ENCODE measurements at regions of chr2 and their contacts with region 1.

Region 1: DNA sequence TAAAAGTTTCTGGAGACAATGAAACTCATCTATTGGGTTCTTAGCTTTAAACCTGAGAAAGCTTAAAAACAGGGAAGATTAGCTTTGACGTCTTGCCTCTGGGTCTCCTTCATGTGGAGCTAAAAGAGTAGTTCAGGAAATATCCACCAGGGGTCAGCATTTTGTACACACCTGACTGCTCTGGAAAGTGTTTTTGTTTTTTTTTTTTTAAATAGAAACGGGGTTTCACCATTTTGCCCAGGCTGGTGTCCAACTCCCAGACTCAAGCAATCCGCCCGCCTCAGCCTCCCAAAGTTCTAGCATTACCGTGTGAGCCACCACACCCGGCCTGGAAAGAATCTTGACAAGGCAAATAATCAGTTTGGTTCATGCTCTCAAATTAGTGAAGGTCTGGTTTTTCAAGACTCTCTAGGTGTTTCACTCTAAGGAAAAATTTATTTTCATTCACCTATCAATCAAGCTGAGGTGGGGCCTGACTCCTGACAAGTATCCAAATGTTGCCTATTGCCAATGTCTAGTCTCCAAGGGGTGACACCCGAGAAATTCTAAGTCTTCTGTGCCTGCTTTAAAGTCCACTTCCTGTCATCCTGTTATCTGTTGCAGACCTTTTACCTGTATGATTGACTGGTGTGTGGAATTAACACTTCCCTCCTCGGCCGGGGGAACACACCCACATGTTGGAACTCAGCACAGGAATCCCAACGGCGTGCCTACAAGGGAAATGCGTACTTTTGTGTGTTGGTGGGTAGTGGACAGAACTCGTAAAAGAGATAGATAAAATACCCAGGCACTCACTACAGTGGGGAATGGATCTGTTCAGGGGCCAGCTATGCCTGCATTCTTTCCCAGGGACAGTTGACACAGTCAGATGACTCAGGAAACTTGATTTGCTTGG is 11.3 kb downstream of the IL1RN start:
- DNase-seq: peak; percentile 64
- H3K4me3 Mint-ChIP-seq: peak overlapping the region; percentile 11
- H3K27ac Mint-ChIP-seq: peak overlapping the region; percentile 51
- H3K4me1 Mint-ChIP-seq: peaks cover 35% of the 10 kb centered on the region
- H3K27me3 Mint-ChIP-seq: peaks cover 6% of the 10 kb centered on the region

Region 2: GRCh38 chr2:113105047-113105785 is 33.5 kb before region 1 on chr2:
- intact Hi-C with region 1: loop called (anchors 2 kb)
- DNase-seq: no peak
- H3K4me3 Mint-ChIP-seq: peak overlapping the region; percentile 0
- H3K27ac Mint-ChIP-seq: peak overlapping the region; percentile 96
- H3K4me1 Mint-ChIP-seq: peaks cover 65% of the 10 kb centered on the region
- H3K27me3 Mint-ChIP-seq: peaks cover 2% of the 10 kb centered on the region

Region 3: DNA sequence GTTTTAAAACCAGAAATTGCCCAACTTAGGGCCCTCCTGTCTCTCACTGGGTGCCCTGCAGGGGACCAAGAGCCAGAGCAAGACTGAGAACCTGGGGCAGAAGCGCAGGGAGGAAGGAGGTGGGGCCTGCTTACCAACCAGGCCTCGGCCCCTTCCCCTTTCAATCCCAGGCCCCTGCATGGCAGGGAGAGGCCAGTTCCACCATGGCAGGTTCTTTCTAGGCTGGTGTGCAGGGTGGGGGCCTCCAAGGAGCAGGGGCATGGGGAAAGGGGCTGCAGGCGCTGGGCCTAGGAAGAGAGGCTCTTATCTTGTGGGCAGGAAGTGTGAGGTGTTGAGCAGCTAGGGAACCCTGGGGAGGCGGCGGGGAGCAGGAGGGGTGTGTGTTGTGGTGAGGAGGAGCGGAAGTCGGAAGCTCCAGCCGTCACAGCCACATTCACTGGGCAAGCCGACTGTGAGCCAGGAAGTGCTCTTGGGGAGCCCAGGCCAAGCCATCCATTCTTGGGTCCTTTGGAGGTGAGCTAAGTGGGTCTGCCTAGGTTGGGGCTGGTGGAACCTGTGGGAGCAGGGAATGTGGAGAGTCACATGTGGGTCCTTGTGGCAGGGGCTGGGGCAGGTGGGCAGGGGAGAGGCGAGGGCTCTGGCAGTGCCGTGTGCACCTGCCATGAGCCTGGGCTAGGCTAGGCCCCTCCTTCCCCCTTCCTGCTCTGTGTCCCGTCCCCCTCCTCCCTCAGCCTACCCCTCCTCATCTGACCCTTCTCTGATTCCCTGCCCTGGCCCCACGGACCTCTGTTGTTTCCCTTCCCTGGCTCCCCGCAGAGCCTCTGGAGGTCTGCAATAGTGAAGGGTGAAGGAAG is 35.1 kb after region 1 on chr2 and contains the start of gene PSD4:
- intact Hi-C with region 1: loop called (anchors 1 kb)
- DNase-seq: peak; percentile 86
- H3K4me3 Mint-ChIP-seq: peak within 1 kb of the TSS; percentile 89
- H3K27ac Mint-ChIP-seq: peak within 1 kb of the TSS; percentile 93
- H3K4me1 Mint-ChIP-seq: peaks cover 72% of the 10 kb centered on the region
- H3K27me3 Mint-ChIP-seq: peaks cover 3% of the 10 kb centered on the region
- total RNA-seq, gene PSD4: 249 and 257 TPM in 2 replicates

Region 4: GRCh38 chr2:113203901-113204519 is 65.3 kb after region 1 on chr2:
- intact Hi-C with region 1: loop called (anchors 1 kb)
- DNase-seq: peak; percentile 63
- H3K4me3 Mint-ChIP-seq: no peak overlapping the region
- H3K27ac Mint-ChIP-seq: peak overlapping the region; percentile 23
- H3K4me1 Mint-ChIP-seq: peaks cover 14% of the 10 kb centered on the region
- H3K27me3 Mint-ChIP-seq: no peaks in the 10 kb centered on the region

Region 5: DNA sequence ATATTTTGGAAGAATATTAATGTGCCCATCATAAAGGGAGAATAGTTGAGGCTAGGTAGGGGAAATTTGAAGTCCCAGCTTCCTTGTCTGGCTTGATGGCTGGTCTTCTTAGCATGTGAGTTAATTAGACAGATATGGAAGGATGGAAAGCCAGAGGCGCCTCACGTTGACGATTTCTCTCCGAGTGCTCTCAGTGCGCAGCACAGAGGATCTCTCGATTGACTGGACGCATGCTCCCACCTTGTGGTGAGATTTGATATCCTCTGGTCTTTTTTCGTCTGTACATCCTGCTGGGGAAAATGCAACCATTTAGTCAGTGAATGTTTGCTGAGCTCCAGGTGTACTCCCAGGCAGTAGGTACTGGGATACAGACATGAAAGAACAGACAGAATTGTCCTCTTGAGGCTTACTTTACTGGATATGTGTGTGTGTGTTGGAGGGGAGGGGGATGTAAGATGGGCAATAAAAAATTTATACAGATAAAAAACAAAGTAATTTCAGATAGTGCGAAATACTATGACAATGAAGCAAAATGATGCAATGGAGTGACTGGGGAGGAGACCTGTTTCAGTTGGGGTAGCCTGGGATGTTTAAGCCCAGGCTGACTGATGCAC is 231.9 kb after region 1 on chr2:
- intact Hi-C with region 1: loop called (anchors 1 kb)
- DNase-seq: peak; percentile 47
- H3K4me3 Mint-ChIP-seq: no peak overlapping the region
- H3K27ac Mint-ChIP-seq: no peak overlapping the region
- H3K4me1 Mint-ChIP-seq: peaks cover 8% of the 10 kb centered on the region
- H3K27me3 Mint-ChIP-seq: peaks cover 8% of the 10 kb centered on the region